Ascending aorta (tissue), 2 donors: ENCODE measurements at regions of chr16 and their contacts with region 1.

Region 1: GRCh38 chr16:14486520-14487303 is 143.3 kb downstream of the PARN start:
- DNase-seq: peak; percentile 46 to 91
- H3K4me3 ChIP-seq: peak overlapping the region; percentile 31 to 33
- H3K27ac ChIP-seq: peak overlapping the region; percentile 14 to 22
- H3K4me1 ChIP-seq: peaks cover 3 to 16% of the 10 kb centered on the region in 2 donors
- H3K27me3 ChIP-seq: no peaks in the 10 kb centered on the region
- CTCF ChIP-seq: peak in 1 of 3 experiments; percentile 17

Region 2: GRCh38 chr16:14309001-14309886 is 177.5 kb before region 1 on chr16:
- intact Hi-C with region 1: loop called (anchors 5 kb)
- DNase-seq: no peak
- H3K4me3 ChIP-seq: no peak overlapping the region
- H3K27ac ChIP-seq: peak overlapping the region; percentile 21 to 37
- H3K4me1 ChIP-seq: peaks cover 10 to 44% of the 10 kb centered on the region in 2 donors
- H3K27me3 ChIP-seq: no peaks in the 10 kb centered on the region
- CTCF ChIP-seq: no peak

Region 3: GRCh38 chr16:14321542-14321941 is 165.2 kb before region 1 on chr16:
- intact Hi-C with region 1: no loop called
- DNase-seq: no peak
- H3K4me3 ChIP-seq: no peak overlapping the region
- H3K27ac ChIP-seq: no peak overlapping the region
- H3K4me1 ChIP-seq: peaks cover 0 to 8% of the 10 kb centered on the region in 2 donors
- H3K27me3 ChIP-seq: no peaks in the 10 kb centered on the region
- CTCF ChIP-seq: no peak

Region 4: GRCh38 chr16:14334366-14335139 is 152.2 kb before region 1 on chr16:
- intact Hi-C with region 1: no loop called
- DNase-seq: no peak
- H3K4me3 ChIP-seq: no peak overlapping the region
- H3K27ac ChIP-seq: no peak overlapping the region
- H3K4me1 ChIP-seq: no peaks in the 10 kb centered on the region
- H3K27me3 ChIP-seq: no peaks in the 10 kb centered on the region
- CTCF ChIP-seq: no peak

Region 5: DNA sequence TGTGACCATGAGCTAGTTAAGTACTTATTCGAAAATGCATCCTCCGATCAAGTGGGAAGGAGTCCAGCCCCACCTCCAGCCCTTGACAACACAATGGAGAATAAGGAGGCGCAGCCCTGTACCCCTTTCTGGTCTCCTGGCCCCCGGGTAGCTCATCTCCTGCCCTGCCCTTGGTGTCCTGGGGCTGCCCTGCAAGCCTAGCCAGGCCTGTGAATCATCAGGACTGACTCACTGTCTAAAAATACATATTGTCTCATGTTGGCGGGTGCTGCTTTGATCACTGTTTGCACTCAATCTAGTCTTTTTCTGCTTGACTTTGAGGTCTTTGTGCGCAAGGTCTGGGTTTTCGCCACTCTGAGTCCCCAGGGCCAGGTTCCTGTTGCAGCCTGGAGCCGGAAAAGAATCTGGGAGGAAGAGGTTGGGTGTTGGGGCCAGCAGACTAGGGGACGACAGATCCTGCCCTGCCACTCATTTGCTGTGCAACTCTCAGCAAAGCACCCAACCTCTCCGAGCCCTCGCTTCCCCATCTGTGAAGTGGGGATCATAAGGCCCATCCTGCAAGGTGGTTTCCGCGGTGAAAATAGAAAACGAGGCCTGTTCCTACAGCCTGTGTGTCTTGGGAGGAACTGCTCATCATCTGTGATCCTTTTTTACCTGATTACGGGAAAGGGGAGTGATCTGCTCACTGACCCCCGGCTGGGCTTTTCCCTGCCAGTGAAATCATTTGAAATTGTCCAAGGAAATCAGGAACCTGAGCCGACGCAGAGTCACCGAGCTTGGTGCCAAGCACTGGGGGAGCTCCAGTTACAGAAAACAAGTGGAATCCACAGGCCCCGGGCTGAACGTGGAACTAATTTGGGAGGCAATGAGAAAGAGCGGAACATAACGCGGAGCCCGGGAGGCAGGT is 87.1 kb before region 1 on chr16:
- intact Hi-C with region 1: loop called (anchors 5 kb)
- DNase-seq: peak; percentile 29 to 90
- H3K4me3 ChIP-seq: peak overlapping the region in 1 of 2 donors; percentile 28
- H3K27ac ChIP-seq: peak overlapping the region; percentile 59 to 87
- H3K4me1 ChIP-seq: peaks cover 9 to 19% of the 10 kb centered on the region in 2 donors
- H3K27me3 ChIP-seq: no peaks in the 10 kb centered on the region
- CTCF ChIP-seq: peak in 1 of 3 experiments; percentile 9

Region 6: DNA sequence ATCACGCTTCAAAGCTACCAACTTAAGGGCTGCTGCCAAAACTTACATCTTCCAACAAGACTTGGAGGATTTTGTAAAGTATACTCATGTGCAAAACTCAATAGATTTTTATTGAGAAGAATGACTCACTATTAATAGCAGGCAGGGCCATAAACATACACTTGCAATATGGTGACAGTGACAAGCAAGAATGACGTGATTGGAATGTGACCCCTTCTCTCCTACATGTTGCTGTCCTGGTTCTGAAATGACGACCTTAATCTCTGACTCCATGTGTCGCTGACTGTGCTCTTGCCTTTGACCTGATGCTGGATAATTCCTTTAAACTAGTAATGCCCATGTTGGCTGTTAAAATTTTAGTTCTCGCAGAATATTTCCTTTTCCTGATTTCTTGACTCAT is 31.1 kb before region 1 on chr16:
- intact Hi-C with region 1: no loop called
- DNase-seq: no peak
- H3K4me3 ChIP-seq: no peak overlapping the region
- H3K27ac ChIP-seq: no peak overlapping the region
- H3K4me1 ChIP-seq: no peaks in the 10 kb centered on the region
- H3K27me3 ChIP-seq: no peaks in the 10 kb centered on the region
- CTCF ChIP-seq: no peak

Region 7: DNA sequence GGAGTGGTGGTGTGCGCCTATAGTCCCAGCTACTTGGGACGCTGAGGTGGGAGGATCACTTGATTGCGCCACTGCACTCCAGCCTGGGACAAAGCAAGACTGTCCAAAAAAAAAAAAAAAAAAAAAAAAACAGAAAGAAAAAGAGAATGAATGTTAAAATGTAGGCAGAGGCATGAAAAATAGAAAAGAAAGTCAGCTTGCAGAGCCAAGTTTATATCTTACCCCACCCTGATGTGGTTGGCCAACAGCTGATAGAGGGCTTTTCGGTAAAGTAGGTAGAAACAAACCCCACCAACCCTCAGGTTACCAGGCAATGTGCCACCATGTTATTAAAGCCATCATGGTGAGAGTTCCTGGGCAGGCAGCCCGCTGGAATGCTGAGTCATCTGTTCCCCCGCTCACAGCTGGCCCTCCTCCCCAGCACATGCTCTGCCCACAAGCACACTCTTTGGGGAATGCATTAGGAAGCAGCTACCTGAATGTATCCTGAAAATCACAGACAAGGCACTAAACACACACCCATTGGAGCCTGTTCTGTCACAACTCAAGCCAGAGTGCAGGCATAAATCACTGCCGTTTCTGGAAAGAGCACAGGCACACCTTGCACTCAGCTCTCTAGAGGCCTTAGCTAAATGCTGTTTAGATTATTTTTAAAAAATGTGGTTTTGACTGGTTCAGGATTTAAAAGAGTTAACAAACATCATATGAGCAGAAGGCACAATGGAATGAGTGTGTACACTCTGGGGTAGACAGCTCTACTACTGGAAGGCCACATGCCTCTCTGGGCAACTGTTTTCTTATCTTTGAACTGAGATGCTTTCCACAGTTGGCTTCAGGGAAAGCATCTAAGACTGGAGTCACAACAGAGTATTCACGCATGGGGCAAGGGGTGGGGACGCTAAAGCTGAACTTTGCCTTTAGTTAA is 14.9 kb after region 1 on chr16:
- intact Hi-C with region 1: loop called (anchors 2 kb)
- DNase-seq: peak; percentile 66 to 93
- H3K4me3 ChIP-seq: peak overlapping the region in 1 of 2 donors; percentile 33
- H3K27ac ChIP-seq: peak overlapping the region; percentile 77 to 84
- H3K4me1 ChIP-seq: peaks cover 10 to 25% of the 10 kb centered on the region in 2 donors
- H3K27me3 ChIP-seq: no peaks in the 10 kb centered on the region
- CTCF ChIP-seq: no peak

Region 8: GRCh38 chr16:14529010-14529669 is 42.4 kb after region 1 on chr16:
- intact Hi-C with region 1: loop called (anchors 1 kb)
- DNase-seq: peak; percentile 16 to 85
- H3K4me3 ChIP-seq: peak overlapping the region in 1 of 2 donors; percentile 52
- H3K27ac ChIP-seq: peak overlapping the region in 1 of 2 donors; percentile 62
- H3K4me1 ChIP-seq: peaks cover 9 to 24% of the 10 kb centered on the region in 2 donors
- H3K27me3 ChIP-seq: no peaks in the 10 kb centered on the region
- CTCF ChIP-seq: peak; percentile 62 to 83 (median 74)

Region 9: GRCh38 chr16:14562691-14563491 is 76.2 kb after region 1 on chr16:
- intact Hi-C with region 1: no loop called
- DNase-seq: no peak
- H3K4me3 ChIP-seq: no peak overlapping the region
- H3K27ac ChIP-seq: no peak overlapping the region
- H3K4me1 ChIP-seq: peaks cover 0 to 7% of the 10 kb centered on the region in 2 donors
- H3K27me3 ChIP-seq: no peaks in the 10 kb centered on the region
- CTCF ChIP-seq: peak in 2 of 3 experiments; percentile 13 to 20